ENCODE measurements at regions of chr18 and their contacts with region 1.

Region 1: GRCh38 chr18:70195852-70196434 is 9.5 kb downstream of the RTTN start:
- DNase-seq: peak; percentile 31
- H3K4me3 Mint-ChIP-seq: no peak overlapping the region
- H3K27ac Mint-ChIP-seq: no peak overlapping the region
- H3K4me1 Mint-ChIP-seq: peaks cover 14% of the 10 kb centered on the region
- H3K27me3 Mint-ChIP-seq: no peaks in the 10 kb centered on the region

Region 2: GRCh38 chr18:69636529-69637301 is 559.2 kb before region 1 on chr18:
- CTCF ChIA-PET with region 1: no interaction called
- intact Hi-C with region 1: loop called (anchors 5 kb)
- DNase-seq: peak; percentile 34
- H3K4me3 Mint-ChIP-seq: no peak overlapping the region
- H3K27ac Mint-ChIP-seq: no peak overlapping the region
- H3K4me1 Mint-ChIP-seq: no peaks in the 10 kb centered on the region
- H3K27me3 Mint-ChIP-seq: no peaks in the 10 kb centered on the region

Region 3: DNA sequence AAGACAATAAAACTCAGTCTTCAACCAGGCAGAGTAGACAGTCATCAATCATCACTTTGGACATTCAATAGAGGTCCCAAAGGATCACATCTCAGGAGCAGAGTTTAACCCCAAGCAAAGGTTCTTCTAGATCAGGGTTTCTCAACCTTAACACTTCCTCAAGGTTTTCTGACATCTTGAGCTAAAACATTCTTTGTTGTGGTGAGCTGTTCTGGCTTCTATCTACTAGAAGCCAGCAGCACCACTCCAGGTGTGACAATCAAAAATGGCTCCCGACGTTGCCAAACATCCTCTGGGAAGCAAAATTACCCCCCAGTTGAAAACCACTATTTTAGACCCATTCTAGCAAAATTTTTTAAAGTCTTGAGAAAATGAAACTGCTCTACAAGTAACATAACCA is 12.5 kb before region 1 on chr18:
- CTCF ChIA-PET with region 1: interaction called, 22 read pairs
- intact Hi-C with region 1: no loop called
- DNase-seq: no peak
- H3K4me3 Mint-ChIP-seq: no peak overlapping the region
- H3K27ac Mint-ChIP-seq: no peak overlapping the region
- H3K4me1 Mint-ChIP-seq: peaks cover 8% of the 10 kb centered on the region
- H3K27me3 Mint-ChIP-seq: no peaks in the 10 kb centered on the region

Region 4: GRCh38 chr18:70221156-70221914 is 25.4 kb after region 1 on chr18:
- CTCF ChIA-PET with region 1: no interaction called
- intact Hi-C with region 1: no loop called
- DNase-seq: no peak
- H3K4me3 Mint-ChIP-seq: no peak overlapping the region
- H3K27ac Mint-ChIP-seq: no peak overlapping the region
- H3K4me1 Mint-ChIP-seq: no peaks in the 10 kb centered on the region
- H3K27me3 Mint-ChIP-seq: peaks cover 35% of the 10 kb centered on the region

Region 5: DNA sequence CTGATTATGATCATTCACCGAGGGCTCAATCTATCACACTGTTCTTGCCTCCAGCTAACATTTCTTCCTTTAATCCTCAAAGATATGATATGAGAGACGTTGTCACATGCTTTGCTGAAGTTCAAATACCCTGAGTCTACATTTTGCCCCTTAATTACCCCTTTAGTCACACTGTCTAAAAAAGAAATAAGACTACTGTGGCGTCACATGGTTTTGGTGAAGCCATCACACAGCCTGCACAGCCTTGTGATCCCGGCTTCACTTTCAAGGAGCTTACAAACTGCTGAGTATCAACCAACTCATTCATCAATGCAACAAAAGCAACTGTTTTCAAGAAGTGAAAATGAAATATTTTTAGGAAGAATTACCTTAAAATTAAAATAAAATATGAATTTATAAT is 61.1 kb after region 1 on chr18:
- CTCF ChIA-PET with region 1: no interaction called
- intact Hi-C with region 1: no loop called
- DNase-seq: no peak
- H3K4me3 Mint-ChIP-seq: no peak overlapping the region
- H3K27ac Mint-ChIP-seq: no peak overlapping the region
- H3K4me1 Mint-ChIP-seq: no peaks in the 10 kb centered on the region
- H3K27me3 Mint-ChIP-seq: peaks cover 5% of the 10 kb centered on the region

Region 6: DNA sequence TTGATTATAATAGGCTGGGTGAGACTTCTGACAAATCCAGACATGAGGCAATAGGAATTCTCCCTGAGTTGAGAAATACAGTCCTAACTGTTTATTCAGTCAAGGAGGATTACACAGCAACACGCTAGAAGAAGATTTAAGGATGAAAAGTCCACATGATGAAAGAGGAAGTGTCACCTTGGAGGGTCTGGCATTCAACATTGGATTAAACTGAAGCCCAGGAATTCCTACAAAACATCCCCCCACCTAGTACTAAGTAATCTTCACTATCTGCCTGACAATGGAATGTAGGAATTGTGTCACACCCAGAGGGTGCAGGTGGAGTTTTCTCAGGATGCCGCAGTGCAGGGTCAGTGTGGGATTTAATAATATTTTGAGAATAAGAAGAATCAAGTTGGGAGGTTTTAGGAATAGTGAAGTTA is 235.3 kb after region 1 on chr18:
- CTCF ChIA-PET with region 1: interaction called, 63 read pairs
- intact Hi-C with region 1: loop called (anchors 1 kb)
- DNase-seq: no peak
- H3K4me3 Mint-ChIP-seq: no peak overlapping the region
- H3K27ac Mint-ChIP-seq: no peak overlapping the region
- H3K4me1 Mint-ChIP-seq: no peaks in the 10 kb centered on the region
- H3K27me3 Mint-ChIP-seq: no peaks in the 10 kb centered on the region